PC-3 (cell line): ENCODE measurements at regions of chr7 and their contacts with region 1.

Region 1: GRCh38 chr7:111368381-111369065 is 193.8 kb downstream of the IMMP2L start:
- DNase-seq: no peak
- ATAC-seq: no peak
- H3K4me3 ChIP-seq: no peak overlapping the region
- H3K27ac ChIP-seq: no peak overlapping the region
- H3K4me1 ChIP-seq: peaks cover 4% of the 10 kb centered on the region
- H3K27me3 ChIP-seq: no peaks in the 10 kb centered on the region
- CTCF ChIP-seq: no peak

Region 2: DNA sequence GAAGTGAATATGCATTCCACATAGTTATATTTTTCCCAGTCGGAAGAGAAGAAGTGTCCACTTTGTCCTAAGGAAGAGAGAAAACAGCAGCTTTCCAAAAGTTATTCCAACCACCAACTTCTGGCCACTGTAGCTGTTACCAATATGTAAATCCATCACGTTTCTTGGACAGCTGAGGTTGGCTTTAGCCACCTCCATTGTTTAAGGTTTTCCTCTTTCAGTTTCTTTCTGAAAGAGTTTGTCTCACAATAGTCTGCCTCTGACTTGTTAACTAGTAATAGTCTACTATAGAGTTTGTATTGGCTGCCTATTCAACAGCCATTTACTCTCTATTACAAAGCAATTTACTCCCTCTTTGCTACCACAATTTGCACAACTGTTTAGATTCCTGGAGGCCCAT is 735.2 kb before region 1 on chr7:
- CTCF ChIA-PET with region 1: no interaction called
- POLR2A ChIA-PET with region 1: no interaction called
- intact Hi-C with region 1: no loop called
- DNase-seq: no peak
- ATAC-seq: no peak
- H3K4me3 ChIP-seq: no peak overlapping the region
- H3K27ac ChIP-seq: no peak overlapping the region
- H3K4me1 ChIP-seq: no peaks in the 10 kb centered on the region
- H3K27me3 ChIP-seq: no peaks in the 10 kb centered on the region
- CTCF ChIP-seq: no peak

Region 3: DNA sequence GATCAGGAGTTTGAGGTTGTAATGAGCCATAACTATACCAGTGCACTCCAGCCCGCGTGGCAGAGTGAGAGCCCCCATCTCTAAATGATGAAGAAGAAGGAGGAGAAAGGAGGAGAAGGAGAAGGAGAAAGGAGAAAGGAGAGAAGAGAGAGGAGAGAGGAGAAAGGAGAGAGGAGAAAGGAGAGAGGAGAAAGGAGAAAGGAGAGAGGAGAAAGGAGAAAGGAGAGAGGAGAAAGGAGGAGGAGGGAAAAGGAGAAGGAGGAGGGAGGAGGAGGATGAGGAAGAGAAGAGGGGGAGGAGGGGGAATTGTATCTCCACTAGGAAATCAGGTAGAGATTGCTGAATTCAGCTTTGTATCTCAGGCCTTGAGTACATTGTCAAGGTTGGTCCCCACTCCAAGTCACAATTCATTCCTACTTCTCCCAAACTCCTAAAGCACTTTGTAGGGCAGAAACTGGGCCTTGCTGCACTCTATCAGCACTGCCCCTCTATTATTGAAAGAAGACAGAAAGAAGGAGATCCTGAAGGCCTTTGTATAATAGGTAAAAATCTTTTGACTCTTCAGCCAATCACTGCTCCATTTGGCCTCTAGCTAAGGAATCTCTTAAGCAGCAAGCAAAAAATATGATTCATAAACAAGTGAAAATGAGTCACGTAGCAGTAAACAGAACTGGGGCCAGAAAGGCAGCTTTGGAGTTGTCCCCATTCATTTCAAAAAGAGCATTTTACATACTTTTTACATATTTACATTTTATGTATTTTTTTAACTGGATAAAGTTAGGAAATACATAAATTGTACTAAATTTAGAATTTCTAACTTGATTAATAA is 15.8 kb after region 1 on chr7:
- CTCF ChIA-PET with region 1: no interaction called
- POLR2A ChIA-PET with region 1: no interaction called
- intact Hi-C with region 1: no loop called
- DNase-seq: peak; percentile 73
- ATAC-seq: peak; percentile 95
- H3K4me3 ChIP-seq: no peak overlapping the region
- H3K27ac ChIP-seq: peak overlapping the region; percentile 22
- H3K4me1 ChIP-seq: peaks cover 17% of the 10 kb centered on the region
- H3K27me3 ChIP-seq: no peaks in the 10 kb centered on the region
- CTCF ChIP-seq: no peak

Region 4: GRCh38 chr7:111394891-111395290 is 26.4 kb after region 1 on chr7:
- CTCF ChIA-PET with region 1: no interaction called
- POLR2A ChIA-PET with region 1: no interaction called
- intact Hi-C with region 1: no loop called
- DNase-seq: no peak
- ATAC-seq: no peak
- H3K4me3 ChIP-seq: no peak overlapping the region
- H3K27ac ChIP-seq: no peak overlapping the region
- H3K4me1 ChIP-seq: no peaks in the 10 kb centered on the region
- H3K27me3 ChIP-seq: no peaks in the 10 kb centered on the region
- CTCF ChIP-seq: no peak

Region 5: GRCh38 chr7:111409714-111410422 is 41.3 kb after region 1 on chr7:
- CTCF ChIA-PET with region 1: no interaction called
- POLR2A ChIA-PET with region 1: no interaction called
- intact Hi-C with region 1: loop called (anchors 5 kb)
- DNase-seq: no peak
- ATAC-seq: no peak
- H3K4me3 ChIP-seq: no peak overlapping the region
- H3K27ac ChIP-seq: no peak overlapping the region
- H3K4me1 ChIP-seq: no peaks in the 10 kb centered on the region
- H3K27me3 ChIP-seq: no peaks in the 10 kb centered on the region
- CTCF ChIP-seq: no peak